CD4-positive, alpha-beta memory T cell (primary cell): ENCODE measurements at regions of chr13 and their contacts with region 1.

Region 1: GRCh38 chr13:94505730-94506129 is 26.2 kb upstream of the DCT start:
- DNase-seq: no peak
- H3K4me3 ChIP-seq: no peak overlapping the region
- H3K4me3 Mint-ChIP-seq: no peak overlapping the region
- H3K27ac ChIP-seq: no peak overlapping the region
- H3K27ac Mint-ChIP-seq: no peak overlapping the region
- H3K4me1 ChIP-seq: peaks cover 13% of the 10 kb centered on the region
- H3K4me1 Mint-ChIP-seq: peaks cover 4 to 14% (median 9%) of the 10 kb centered on the region in 4 donors
- H3K27me3 ChIP-seq: no peaks in the 10 kb centered on the region
- H3K27me3 Mint-ChIP-seq: peaks cover 7 to 13% of the 10 kb centered on the region in 2 donors

Region 2: GRCh38 chr13:94362411-94362909 is 143.3 kb before region 1 on chr13:
- CTCF ChIA-PET with region 1: no interaction called
- POLR2A ChIA-PET with region 1: no interaction called
- intact Hi-C with region 1: no loop called
- DNase-seq: peak; percentile 65 to 69 (median 67)
- H3K4me3 ChIP-seq: no peak overlapping the region
- H3K4me3 Mint-ChIP-seq: no peak overlapping the region
- H3K27ac ChIP-seq: no peak overlapping the region
- H3K27ac Mint-ChIP-seq: no peak overlapping the region
- H3K4me1 ChIP-seq: no peaks in the 10 kb centered on the region
- H3K4me1 Mint-ChIP-seq: peaks cover 0 to 3% (median 2%) of the 10 kb centered on the region in 4 donors
- H3K27me3 ChIP-seq: no peaks in the 10 kb centered on the region
- H3K27me3 Mint-ChIP-seq: peaks cover 7 to 11% of the 10 kb centered on the region in 2 donors

Region 3: DNA sequence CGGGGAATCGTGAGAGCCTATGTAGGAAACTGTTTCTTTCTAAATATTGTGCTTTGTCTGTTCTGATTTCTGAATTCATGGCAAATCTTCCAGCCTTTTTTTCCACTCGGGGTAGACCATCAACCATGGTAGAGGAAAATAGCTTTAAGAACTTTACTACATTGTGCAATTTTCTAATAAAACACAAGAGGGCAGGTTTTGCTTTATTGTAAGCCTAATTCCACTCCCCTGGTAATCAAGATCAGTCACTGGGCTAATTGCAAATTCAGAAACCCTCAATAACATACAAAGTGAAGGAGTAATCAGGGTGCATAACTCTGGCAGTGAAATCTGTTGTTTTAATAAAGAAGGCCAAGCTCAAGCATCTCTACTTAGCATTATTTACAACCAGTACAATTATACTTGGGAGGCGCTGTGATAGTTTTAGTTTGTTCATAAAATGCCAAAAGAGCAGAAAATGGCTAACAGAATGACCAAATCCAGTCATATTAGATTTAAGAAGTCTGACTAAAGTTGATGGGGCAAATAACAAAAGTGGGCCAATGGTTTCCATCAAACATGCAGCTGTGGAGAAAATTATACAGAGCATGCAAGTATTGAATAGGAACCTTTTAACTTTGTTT is 70.0 kb before region 1 on chr13:
- CTCF ChIA-PET with region 1: interaction called, 3 read pairs
- POLR2A ChIA-PET with region 1: no interaction called
- intact Hi-C with region 1: loop called (anchors 5 kb)
- DNase-seq: peak in 4 of 5 donors; percentile 38 to 52 (median 44)
- H3K4me3 ChIP-seq: no peak overlapping the region
- H3K4me3 Mint-ChIP-seq: no peak overlapping the region
- H3K27ac ChIP-seq: no peak overlapping the region
- H3K27ac Mint-ChIP-seq: no peak overlapping the region
- H3K4me1 ChIP-seq: no peaks in the 10 kb centered on the region
- H3K4me1 Mint-ChIP-seq: peaks cover 0 to 3% (median 0%) of the 10 kb centered on the region in 4 donors
- H3K27me3 ChIP-seq: no peaks in the 10 kb centered on the region
- H3K27me3 Mint-ChIP-seq: peaks cover 0 to 1% of the 10 kb centered on the region in 2 donors

Region 4: GRCh38 chr13:94842901-94843300 is 337.2 kb after region 1 on chr13:
- CTCF ChIA-PET with region 1: no interaction called
- POLR2A ChIA-PET with region 1: no interaction called
- intact Hi-C with region 1: no loop called
- DNase-seq: no peak
- H3K4me3 ChIP-seq: no peak overlapping the region
- H3K4me3 Mint-ChIP-seq: no peak overlapping the region
- H3K27ac ChIP-seq: no peak overlapping the region
- H3K27ac Mint-ChIP-seq: no peak overlapping the region
- H3K4me1 ChIP-seq: no peaks in the 10 kb centered on the region
- H3K4me1 Mint-ChIP-seq: no peaks in the 10 kb centered on the region
- H3K27me3 ChIP-seq: no peaks in the 10 kb centered on the region
- H3K27me3 Mint-ChIP-seq: peaks cover 0 to 1% of the 10 kb centered on the region in 2 donors